Activated CD8-positive, alpha-beta T cell treated with anti-CD3 and anti-CD28 coated beads, Interleukin-2, amount 10 ng/mL, durations not matched to agents 7 days and 5 days (primary cell): ENCODE measurements at regions of chr16 and their contacts with region 1.

Region 1: GRCh38 chr16:11255737-11256660 is at the start of gene SOCS1:
- DNase-seq: peak; percentile 91
- ATAC-seq: peak; percentile 71
- H3K4me3 Mint-ChIP-seq: peak within 1 kb of the TSS; percentile 97
- H3K27ac Mint-ChIP-seq: peak within 1 kb of the TSS; percentile 96
- H3K4me1 Mint-ChIP-seq: peaks cover 54% of the 10 kb centered on the region
- H3K27me3 Mint-ChIP-seq: no peaks in the 10 kb centered on the region
- total RNA-seq, gene SOCS1: 170 to 174 TPM

Region 2: DNA sequence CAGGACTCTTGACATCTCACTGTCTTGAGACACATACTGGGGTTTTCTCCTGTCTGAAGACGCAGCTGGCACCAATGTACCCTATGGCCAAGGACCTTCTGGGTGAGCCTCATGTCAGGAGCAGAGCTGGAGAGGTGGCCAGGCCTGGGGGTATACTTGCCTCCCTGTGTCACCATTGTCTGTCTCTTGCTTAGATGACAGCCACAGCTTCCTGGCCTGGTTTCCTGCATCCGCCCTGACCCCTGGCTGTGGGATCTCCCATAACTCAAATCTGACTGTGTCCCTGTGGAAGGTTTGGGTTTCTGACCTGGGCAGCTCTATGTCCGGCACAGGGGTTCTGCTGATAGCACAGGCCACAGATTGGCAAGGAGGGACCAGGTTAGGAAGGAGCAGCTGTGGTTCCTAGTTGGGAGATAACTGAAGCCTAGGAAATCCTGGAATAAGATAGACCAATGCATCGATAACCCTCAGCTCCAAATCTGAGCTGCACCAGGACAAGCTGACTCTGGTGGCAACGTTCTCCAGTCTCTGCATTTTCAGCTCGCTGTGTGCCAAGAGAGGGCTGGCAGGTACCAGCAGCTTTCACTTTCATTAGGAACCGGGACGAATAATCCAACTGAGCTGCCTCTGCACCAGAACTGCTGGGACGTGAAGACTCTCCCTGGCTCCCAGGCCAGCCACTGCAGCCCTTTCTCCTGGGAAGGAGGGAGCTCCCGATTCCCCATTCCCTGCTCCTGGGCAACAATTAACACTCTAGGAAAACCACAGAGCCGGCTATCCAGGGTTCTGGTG is 318.7 kb before region 1 on chr16:
- CTCF ChIA-PET with region 1: no interaction called
- POLR2A ChIA-PET with region 1: no interaction called
- DNase-seq: peak; percentile 36
- ATAC-seq: no peak
- H3K4me3 Mint-ChIP-seq: peak overlapping the region; percentile 68
- H3K27ac Mint-ChIP-seq: peak overlapping the region; percentile 70
- H3K4me1 Mint-ChIP-seq: peaks cover 85% of the 10 kb centered on the region
- H3K27me3 Mint-ChIP-seq: no peaks in the 10 kb centered on the region

Region 3: GRCh38 chr16:10976634-10977033 is 279.4 kb before region 1 on chr16:
- CTCF ChIA-PET with region 1: interaction called, 210 read pairs
- POLR2A ChIA-PET with region 1: interaction called, 33 read pairs
- DNase-seq: no peak
- ATAC-seq: no peak
- H3K4me3 Mint-ChIP-seq: no peak overlapping the region
- H3K27ac Mint-ChIP-seq: no peak overlapping the region
- H3K4me1 Mint-ChIP-seq: peaks cover 81% of the 10 kb centered on the region
- H3K27me3 Mint-ChIP-seq: no peaks in the 10 kb centered on the region

Region 4: DNA sequence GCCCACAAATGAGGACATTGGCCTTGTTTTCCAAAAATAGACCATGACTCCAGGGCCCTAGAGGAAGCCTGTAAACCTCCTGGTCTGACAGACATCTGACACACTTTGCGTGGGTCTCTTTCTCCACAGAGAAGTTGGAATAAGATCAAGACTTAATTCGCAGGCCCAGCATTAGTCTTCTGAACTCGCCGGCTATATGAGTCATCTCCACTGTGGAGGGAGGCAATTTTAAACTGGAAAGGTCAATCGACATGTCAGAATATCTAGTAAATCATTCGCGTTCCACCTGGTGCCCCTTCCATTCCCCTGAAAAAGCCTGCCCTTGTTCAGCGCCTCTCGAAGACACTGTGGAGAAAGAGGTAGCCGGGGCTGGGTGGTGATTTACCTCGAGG is 171.5 kb before region 1 on chr16:
- CTCF ChIA-PET with region 1: interaction called, 6 read pairs
- POLR2A ChIA-PET with region 1: interaction called, 10 read pairs
- DNase-seq: no peak
- ATAC-seq: no peak
- H3K4me3 Mint-ChIP-seq: no peak overlapping the region
- H3K27ac Mint-ChIP-seq: peak overlapping the region; percentile 47
- H3K4me1 Mint-ChIP-seq: peaks cover 90% of the 10 kb centered on the region
- H3K27me3 Mint-ChIP-seq: no peaks in the 10 kb centered on the region

Region 5: GRCh38 chr16:11190588-11191560 is 65.1 kb before region 1 on chr16:
- CTCF ChIA-PET with region 1: interaction called, 10 read pairs
- POLR2A ChIA-PET with region 1: interaction called, 5 read pairs
- DNase-seq: no peak
- ATAC-seq: no peak
- H3K4me3 Mint-ChIP-seq: no peak overlapping the region
- H3K27ac Mint-ChIP-seq: peak overlapping the region; percentile 55
- H3K4me1 Mint-ChIP-seq: peaks cover 55% of the 10 kb centered on the region
- H3K27me3 Mint-ChIP-seq: no peaks in the 10 kb centered on the region

Region 6: DNA sequence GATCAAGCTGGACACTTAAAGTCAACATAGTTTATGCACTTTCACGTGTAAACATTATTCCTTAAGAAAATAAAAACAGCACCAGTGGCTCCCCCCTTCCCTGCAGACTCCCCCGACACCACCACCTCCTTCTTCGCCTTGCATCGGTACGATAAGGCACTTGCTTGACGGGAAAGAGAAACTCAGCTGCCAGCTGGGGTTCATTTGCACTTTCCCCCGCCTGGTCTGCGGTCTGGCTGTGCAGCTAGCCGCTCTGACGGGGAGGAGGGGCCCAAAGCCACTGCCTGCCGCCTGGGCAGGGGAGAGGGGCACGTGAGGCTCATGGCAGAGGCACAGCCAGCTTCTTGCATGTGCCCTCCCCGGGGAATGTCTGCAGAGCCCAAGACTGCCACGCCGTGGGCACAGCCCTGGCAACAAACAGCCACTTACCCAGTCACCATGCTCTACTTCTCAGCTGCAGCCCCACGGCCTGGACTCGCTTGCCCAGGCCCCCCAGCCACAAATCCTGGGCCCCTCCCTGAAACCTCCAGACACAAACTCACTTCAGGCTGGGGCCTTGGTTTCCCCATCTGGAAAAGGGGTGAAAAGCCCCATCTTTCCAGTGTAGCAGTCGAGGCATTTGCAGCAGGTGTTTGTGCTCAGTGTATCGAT is 41.6 kb after region 1 on chr16:
- CTCF ChIA-PET with region 1: interaction called, 22 read pairs
- POLR2A ChIA-PET with region 1: interaction called, 22 read pairs
- DNase-seq: peak; percentile 86
- ATAC-seq: peak; percentile 89
- H3K4me3 Mint-ChIP-seq: peak overlapping the region; percentile 60
- H3K27ac Mint-ChIP-seq: peak overlapping the region; percentile 78
- H3K4me1 Mint-ChIP-seq: peaks cover 64% of the 10 kb centered on the region
- H3K27me3 Mint-ChIP-seq: peaks cover 3% of the 10 kb centered on the region

Region 7: GRCh38 chr16:11370084-11370931 is 114.3 kb after region 1 on chr16:
- CTCF ChIA-PET with region 1: interaction called, 12 read pairs
- POLR2A ChIA-PET with region 1: interaction called, 4 read pairs
- DNase-seq: no peak
- ATAC-seq: no peak
- H3K4me3 Mint-ChIP-seq: no peak overlapping the region
- H3K27ac Mint-ChIP-seq: no peak overlapping the region
- H3K4me1 Mint-ChIP-seq: peaks cover 24% of the 10 kb centered on the region
- H3K27me3 Mint-ChIP-seq: no peaks in the 10 kb centered on the region